Activated CD4-positive, alpha-beta memory T cell treated with anti-CD3 and anti-CD28 coated beads for 36 hours (primary cell): ENCODE measurements at regions of chr3 and their contacts with region 1.

Region 1: GRCh38 chr3:162998205-162998604 is 1501.6 kb downstream of the OTOL1 start:
- DNase-seq: no peak
- H3K4me3 Mint-ChIP-seq: no peak overlapping the region
- H3K27ac Mint-ChIP-seq: no peak overlapping the region
- H3K4me1 Mint-ChIP-seq: no peaks in the 10 kb centered on the region
- H3K27me3 Mint-ChIP-seq: no peaks in the 10 kb centered on the region

Region 2: DNA sequence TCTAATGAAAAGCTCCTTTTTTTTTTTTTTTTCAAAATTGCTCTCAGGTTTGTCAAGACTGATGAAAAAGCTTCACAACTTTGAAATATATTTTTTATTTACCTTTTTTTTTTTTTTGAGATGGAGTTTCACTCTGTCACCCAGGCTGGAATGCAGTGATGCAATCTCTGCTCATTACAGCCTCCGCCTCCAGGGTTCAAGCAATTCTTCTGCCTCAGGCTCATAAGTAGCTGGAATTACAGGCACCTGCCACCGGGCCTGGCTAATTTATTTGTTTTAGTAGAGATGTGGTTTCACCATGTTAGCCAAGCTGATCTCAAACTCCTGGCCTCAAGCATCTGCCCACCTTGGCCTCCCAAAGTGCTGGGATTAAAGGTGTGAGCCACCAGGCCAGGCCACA is 13.4 kb after region 1 on chr3:
- CTCF ChIA-PET with region 1: interaction called, 3 read pairs
- POLR2A ChIA-PET with region 1: no interaction called
- intact Hi-C with region 1: loop called (anchors 1 kb)
- DNase-seq: no peak
- H3K4me3 Mint-ChIP-seq: no peak overlapping the region
- H3K27ac Mint-ChIP-seq: no peak overlapping the region
- H3K4me1 Mint-ChIP-seq: no peaks in the 10 kb centered on the region
- H3K27me3 Mint-ChIP-seq: no peaks in the 10 kb centered on the region